ENCODE measurements at regions of chr11 and their contacts with region 1.

Region 1: DNA sequence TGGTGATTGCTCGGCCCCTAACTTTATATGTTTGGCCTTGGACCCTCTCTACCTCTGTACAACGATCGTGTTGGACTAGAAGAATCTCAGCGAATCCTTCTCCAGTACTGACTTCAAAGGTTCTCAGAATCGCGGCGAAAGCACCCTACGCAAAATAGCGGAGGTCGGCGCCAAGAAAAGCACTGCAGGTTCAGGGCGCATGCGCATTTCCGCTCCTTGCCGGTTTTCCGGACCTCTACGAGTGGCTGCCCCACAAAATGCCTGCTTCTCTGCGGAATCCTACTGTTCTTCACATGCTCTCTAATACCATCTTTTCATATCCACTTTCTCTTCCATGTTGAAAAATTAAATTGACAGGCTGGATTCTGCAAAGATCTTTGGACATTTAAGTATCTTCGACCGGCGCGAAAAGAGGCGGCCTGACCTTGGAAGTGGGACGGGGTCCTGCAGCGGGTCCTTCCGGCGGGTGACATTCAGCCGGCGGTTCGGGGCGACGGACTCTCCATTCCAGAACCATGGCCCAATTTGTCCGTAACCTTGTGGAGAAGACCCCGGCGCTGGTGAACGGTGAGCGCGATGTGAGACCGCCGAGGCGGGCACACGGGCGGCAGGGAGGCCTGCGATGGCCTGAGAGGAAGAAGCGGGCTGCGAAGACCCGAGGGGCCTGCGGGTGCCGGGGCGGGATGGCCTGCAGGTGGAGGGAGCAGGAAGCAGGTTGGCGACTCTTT is at the start of gene ATP5MG:
- DNase-seq: peak; percentile 92
- H3K4me3 Mint-ChIP-seq: peak within 1 kb of the TSS; percentile 81
- H3K27ac Mint-ChIP-seq: peak within 1 kb of the TSS; percentile 93
- H3K4me1 Mint-ChIP-seq: peaks cover 35% of the 10 kb centered on the region
- H3K27me3 Mint-ChIP-seq: no peaks in the 10 kb centered on the region
- CTCF ChIP-seq: no peak
- total RNA-seq, gene ATP5MG: 197 and 210 TPM in 2 replicates

Region 2: GRCh38 chr11:118415739-118416284 is 14.5 kb after region 1 on chr11:
- CTCF ChIA-PET with region 1: interaction called, 3 read pairs
- POLR2A ChIA-PET with region 1: interaction called, 17 read pairs
- intact Hi-C with region 1: no loop called
- DNase-seq: peak; percentile 84
- H3K4me3 Mint-ChIP-seq: no peak overlapping the region
- H3K27ac Mint-ChIP-seq: no peak overlapping the region
- H3K4me1 Mint-ChIP-seq: no peaks in the 10 kb centered on the region
- H3K27me3 Mint-ChIP-seq: no peaks in the 10 kb centered on the region
- CTCF ChIP-seq: no peak

Region 3: DNA sequence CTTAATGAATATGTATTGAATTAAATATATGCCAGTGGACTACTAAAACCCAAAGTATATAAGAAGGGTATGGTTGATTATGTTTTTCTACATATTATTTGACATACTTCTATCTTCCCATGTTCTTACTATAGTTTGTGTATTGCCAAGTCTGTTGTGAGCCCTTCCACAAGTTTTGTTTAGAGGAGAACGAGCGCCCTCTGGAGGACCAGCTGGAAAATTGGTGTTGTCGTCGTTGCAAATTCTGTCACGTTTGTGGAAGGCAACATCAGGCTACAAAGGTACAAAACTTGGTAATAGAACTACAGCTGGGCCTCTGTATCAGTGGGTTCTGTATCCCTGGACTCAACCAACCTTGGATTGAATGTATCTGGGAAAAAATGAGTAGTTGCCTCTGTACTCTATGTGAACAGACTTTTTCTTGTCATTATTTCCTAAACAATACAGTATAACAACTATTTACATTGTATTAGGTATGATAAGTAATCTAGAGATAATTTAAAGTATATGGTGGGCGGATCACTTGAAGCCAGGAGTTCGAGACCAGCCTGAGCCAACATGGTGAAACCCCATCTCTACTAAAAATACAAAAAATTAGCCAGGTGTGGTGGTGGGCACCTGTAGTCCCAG is 87.3 kb after region 1 on chr11:
- CTCF ChIA-PET with region 1: interaction called, 11 read pairs
- POLR2A ChIA-PET with region 1: interaction called, 7 read pairs
- intact Hi-C with region 1: loop called (anchors 1 kb)
- DNase-seq: peak; percentile 78
- H3K4me3 Mint-ChIP-seq: no peak overlapping the region
- H3K27ac Mint-ChIP-seq: no peak overlapping the region
- H3K4me1 Mint-ChIP-seq: no peaks in the 10 kb centered on the region
- H3K27me3 Mint-ChIP-seq: no peaks in the 10 kb centered on the region
- CTCF ChIP-seq: peak; percentile 74

Measured in MCF 10A (cell line).